ENCODE measurements at regions of chr4 and their contacts with region 1.

Region 1: GRCh38 chr4:8607603-8608481 is 15.3 kb downstream of the CPZ start:
- DNase-seq: peak in 11 of 14 experiments; percentile 5 to 55 (median 22)
- ATAC-seq: no peak
- H3K4me3 ChIP-seq: no peak overlapping the region
- H3K4me3 Mint-ChIP-seq: no peak overlapping the region
- H3K27ac ChIP-seq: no peak overlapping the region
- H3K27ac Mint-ChIP-seq: no peak overlapping the region
- H3K4me1 ChIP-seq: peaks cover 6% of the 10 kb centered on the region
- H3K4me1 Mint-ChIP-seq: no peaks in the 10 kb centered on the region
- H3K27me3 ChIP-seq: no peaks in the 10 kb centered on the region
- H3K27me3 Mint-ChIP-seq: peaks cover 14% of the 10 kb centered on the region
- CTCF ChIP-seq: peak; percentile 87

Region 2: DNA sequence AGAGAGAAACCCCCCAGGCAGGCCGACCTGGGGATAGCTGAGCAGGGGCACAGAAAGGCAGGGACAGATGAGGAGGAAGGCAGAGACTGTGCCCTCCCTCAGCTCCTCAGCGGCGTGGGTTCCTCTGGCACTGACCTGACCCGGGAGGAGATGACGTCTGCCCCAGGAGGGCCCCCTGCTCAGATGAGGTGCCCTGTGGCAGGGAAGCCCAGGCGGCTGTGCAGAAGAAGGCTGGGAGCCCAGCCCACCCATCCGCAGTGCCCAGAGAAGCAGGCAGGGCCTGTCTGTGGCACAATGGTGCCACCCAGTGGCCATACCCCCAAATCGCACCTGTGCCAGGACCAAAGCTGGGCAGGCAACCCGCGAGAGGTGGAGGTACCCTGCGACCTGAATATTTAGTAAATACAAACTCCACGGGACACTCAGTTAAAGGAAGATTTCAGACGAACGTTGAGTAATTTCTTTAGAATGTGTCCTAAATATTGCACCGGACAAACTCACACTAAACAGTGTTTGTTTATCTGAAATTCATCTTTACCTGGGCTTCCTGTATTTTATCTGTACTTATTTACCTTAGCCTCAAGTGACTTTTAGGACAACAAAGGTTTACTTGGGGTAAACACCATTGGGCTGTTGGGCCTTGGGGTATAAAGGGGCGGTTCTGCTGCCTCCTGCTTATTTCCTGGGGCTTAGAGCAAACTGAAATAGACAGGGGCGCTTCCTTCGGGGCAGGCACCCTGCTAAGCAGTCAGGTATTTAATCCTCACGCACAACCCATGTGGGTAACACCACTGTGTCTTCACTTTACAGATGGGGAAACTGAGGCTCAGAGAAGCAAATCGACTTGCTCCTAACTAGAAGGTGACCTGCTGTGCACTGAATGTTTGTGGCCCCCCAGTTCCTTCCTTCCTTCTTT is 310.3 kb after region 1 on chr4:
- CTCF ChIA-PET with region 1: no interaction called
- POLR2A ChIA-PET with region 1: no interaction called
- intact Hi-C with region 1: loop called in 1 of 2 experiments (anchors 10 kb)
- DNase-seq: peak in 13 of 14 experiments; percentile 23 to 69 (median 53)
- ATAC-seq: peak; percentile 65
- H3K4me3 ChIP-seq: no peak overlapping the region
- H3K4me3 Mint-ChIP-seq: no peak overlapping the region
- H3K27ac ChIP-seq: no peak overlapping the region
- H3K27ac Mint-ChIP-seq: no peak overlapping the region
- H3K4me1 ChIP-seq: peaks cover 5% of the 10 kb centered on the region
- H3K4me1 Mint-ChIP-seq: no peaks in the 10 kb centered on the region
- H3K27me3 ChIP-seq: peaks cover 6 to 24% of the 10 kb centered on the region in 2 experiments
- H3K27me3 Mint-ChIP-seq: peaks cover 23% of the 10 kb centered on the region
- CTCF ChIP-seq: peak; percentile 57